Posterior vena cava (tissue), 2 donors: ENCODE measurements at regions of chr1 and their contacts with region 1.

Region 1: DNA sequence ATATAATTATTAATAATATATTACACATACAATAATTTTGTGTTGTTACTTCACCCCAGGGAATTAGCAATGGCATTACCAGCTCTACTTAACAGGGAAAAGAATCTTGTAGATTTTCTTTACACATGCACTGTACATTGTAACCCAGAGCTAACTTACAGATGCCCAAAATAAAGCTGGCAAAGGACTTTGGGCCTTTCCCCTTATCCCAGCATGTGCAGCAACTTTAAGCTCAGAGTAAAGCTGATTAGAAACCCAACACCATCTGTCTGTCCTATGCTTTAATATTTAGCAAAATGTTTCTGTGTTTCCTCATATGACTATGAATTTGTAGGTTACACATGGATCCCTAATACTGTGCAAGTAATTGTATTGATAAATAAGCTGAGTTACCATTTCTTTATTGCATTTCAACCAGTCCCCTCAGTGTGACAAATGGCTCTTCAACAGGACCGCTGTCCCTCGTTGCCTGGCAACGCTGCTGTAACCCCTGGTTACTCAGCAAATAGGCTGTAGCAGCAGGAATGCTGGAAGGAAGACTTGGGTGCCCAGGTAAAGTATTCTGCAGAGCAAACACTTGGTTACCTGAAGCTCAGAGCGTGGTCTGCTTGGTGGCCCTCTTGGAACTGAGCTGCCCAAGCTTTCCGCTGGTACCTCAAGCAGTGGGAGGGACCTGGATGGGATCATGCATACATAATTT is at the start of gene USH2A:
- DNase-seq: no peak
- total RNA-seq, gene USH2A: not detected

Region 2: GRCh38 chr1:215739025-215739424 is 683.9 kb before region 1 on chr1:
- intact Hi-C with region 1: loop called in 1 of 2 experiments (anchors 5 kb)
- DNase-seq: no peak